ENCODE measurements at regions of chr6 and their contacts with region 1.

Region 1: DNA sequence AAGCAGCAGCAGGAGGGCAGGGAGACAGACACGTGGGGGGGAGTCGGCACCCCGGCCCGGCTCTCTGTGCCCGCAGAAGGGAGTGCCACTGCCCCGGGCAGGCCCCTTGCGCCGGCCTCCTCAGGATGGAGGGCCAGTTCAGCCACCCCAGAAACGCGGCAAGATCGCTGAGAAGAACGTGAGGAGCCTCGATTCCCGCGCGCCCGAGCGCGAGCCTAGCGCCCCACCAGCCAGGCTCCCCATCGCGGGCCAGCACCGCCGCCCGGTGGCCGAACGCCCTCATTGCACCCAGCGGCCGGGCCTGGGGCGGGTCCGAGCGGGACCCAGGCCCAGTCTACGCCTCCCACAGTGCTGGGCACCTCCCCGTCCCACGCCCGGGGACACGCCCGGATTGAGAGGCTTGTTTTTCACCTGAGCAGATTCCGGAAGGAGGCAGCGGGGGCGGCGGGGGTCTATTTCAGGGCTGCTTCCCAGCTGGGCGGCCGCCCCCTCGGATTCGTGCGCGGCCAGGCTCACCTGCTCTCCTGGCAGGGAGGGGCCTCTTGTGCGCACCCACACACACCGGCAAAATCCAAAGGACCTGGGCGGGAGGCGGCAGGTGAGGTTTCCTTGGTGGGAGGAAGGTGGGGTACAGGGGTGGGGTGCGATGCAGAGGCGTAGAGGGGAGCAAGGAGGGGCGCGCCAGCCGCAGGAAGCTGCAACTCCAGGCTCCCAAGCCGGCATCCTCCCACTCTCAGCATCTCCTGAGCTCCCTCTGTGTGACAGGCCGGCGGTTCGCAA is 9.0 kb upstream of the GRM4 start:
- DNase-seq: peak; percentile 91
- H3K4me3 Mint-ChIP-seq: peak overlapping the region; percentile 60
- H3K27ac Mint-ChIP-seq: no peak overlapping the region
- H3K4me1 Mint-ChIP-seq: peaks cover 9% of the 10 kb centered on the region
- H3K27me3 Mint-ChIP-seq: peaks cover 94% of the 10 kb centered on the region
- CTCF ChIP-seq: peak; percentile 100

Region 2: GRCh38 chr6:34055223-34055933 is 99.5 kb before region 1 on chr6:
- CTCF ChIA-PET with region 1: interaction called, 37 read pairs
- intact Hi-C with region 1: loop called (anchors 2 kb)
- DNase-seq: peak; percentile 87
- H3K4me3 Mint-ChIP-seq: no peak overlapping the region
- H3K27ac Mint-ChIP-seq: no peak overlapping the region
- H3K4me1 Mint-ChIP-seq: peaks cover 14% of the 10 kb centered on the region
- H3K27me3 Mint-ChIP-seq: peaks cover 97% of the 10 kb centered on the region
- CTCF ChIP-seq: peak; percentile 96

Region 3: DNA sequence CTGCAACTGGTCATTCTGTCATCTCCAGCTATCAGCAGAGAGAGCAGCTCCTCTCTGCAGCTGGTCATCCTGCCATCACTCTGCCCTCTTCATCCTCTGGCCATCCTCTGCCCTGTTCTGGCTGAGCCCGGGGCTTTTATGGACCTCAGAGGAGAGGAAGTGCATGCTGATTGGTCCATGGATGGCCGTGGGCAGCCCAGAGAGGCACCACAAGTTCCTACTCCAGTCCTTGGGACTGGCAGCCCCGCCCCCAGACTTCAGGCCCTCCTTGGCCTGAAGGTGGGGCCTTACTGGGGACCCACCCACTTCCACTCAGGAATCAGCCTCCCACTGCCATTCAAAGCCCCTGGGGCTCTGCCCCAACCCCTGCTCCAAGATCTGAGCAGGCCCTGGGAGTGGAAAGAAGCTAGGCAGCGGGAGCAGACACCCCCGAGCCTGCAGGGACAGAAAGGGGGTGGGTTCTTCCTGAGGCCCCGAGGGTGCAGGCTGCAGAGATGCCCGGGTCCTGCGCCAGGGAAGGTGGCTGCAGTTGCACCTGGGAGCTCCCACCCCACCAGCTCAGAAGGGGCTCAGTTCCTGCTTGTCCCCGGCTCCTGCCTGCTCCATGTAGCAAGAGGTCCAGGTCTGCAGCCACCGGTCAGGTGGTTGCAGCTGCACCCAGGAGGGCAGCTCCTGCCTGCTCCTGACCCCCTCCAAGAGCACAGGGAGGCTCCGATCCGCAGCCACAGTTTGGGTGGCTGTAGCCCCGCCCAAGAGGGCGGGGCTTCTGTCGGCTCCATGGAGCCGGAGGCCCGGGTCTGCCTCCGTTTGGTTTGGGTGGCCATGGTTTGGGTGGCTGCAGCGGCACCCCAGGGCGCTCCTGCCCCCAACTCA is 47.7 kb after region 1 on chr6:
- CTCF ChIA-PET with region 1: no interaction called
- intact Hi-C with region 1: no loop called
- DNase-seq: no peak
- H3K4me3 Mint-ChIP-seq: no peak overlapping the region
- H3K27ac Mint-ChIP-seq: no peak overlapping the region
- H3K4me1 Mint-ChIP-seq: no peaks in the 10 kb centered on the region
- H3K27me3 Mint-ChIP-seq: no peaks in the 10 kb centered on the region
- CTCF ChIP-seq: no peak